ENCODE measurements at regions of chr9 and their contacts with region 1.

Region 1: DNA sequence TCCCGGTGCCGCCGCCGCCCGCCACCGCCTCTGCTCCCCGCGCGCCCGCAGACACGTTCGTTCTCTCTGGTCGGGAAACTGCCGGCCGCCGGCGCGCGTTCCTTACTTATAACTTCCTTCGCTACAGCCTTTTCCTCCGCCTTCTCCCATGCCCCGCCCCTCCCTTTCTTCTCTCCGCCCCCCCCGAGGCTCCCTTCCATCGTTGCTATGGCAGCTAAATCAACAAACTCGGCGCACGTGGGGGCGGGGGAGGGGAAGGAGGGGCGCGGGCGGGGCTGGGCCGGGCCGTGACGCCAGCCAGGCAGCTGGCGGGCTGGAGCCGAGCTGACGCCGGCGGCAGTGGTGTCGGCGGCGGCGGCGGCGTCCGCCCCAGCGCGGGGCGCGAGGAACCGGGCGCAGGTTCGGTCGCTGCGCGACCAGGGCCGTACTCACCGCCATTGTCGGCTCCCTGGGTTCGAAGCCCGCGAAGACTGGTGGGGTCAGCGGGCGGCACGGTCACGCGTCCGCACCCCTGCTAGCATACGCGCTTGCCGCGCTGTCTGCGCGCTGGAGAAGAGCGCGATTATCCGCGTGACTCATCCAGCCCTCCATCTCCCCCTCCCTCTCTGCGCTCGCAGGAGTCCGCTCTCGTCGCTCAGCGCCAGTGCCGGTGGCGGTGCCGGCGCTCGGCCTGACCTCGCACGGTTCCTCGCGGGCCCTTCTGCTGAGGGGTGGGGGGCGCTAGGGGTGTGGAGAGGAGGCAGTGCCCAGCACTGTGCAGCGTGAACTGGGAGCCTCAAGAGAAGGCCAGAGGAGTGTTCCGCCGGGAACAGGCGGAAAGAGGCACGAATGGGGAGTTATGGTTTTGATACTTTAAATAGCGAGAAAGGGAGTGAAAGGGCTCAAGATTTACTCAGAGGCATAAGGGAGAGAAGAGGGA is at the start of gene KLF4:
- DNase-seq: peak; percentile 96
- H3K4me3 ChIP-seq: peak within 1 kb of the TSS; percentile 66 to 95
- H3K27ac ChIP-seq: peak within 1 kb of the TSS; percentile 93 to 95
- H3K4me1 ChIP-seq: peaks cover 4% of the 10 kb centered on the region
- H3K27me3 ChIP-seq: no peaks in the 10 kb centered on the region
- CTCF ChIP-seq: peak in 1 of 4 experiments; percentile 22
- POLR2A ChIP-seq: peak; percentile 61
- total RNA-seq, gene KLF4: 41.4 to 50.0 TPM

Region 2: GRCh38 chr9:107351382-107352045 is 138.4 kb before region 1 on chr9:
- intact Hi-C with region 1: no loop called
- DNase-seq: peak; percentile 36
- H3K4me3 ChIP-seq: no peak overlapping the region
- H3K27ac ChIP-seq: no peak overlapping the region
- H3K4me1 ChIP-seq: no peaks in the 10 kb centered on the region
- H3K27me3 ChIP-seq: no peaks in the 10 kb centered on the region
- CTCF ChIP-seq: no peak
- POLR2A ChIP-seq: no peak

Region 3: GRCh38 chr9:107637421-107638420 is 147.8 kb after region 1 on chr9:
- intact Hi-C with region 1: loop called (anchors 2 kb)
- DNase-seq: peak; percentile 61
- H3K4me3 ChIP-seq: peak overlapping the region; percentile 36 to 38
- H3K27ac ChIP-seq: peak overlapping the region; percentile 66 to 90
- H3K4me1 ChIP-seq: no peaks in the 10 kb centered on the region
- H3K27me3 ChIP-seq: no peaks in the 10 kb centered on the region
- CTCF ChIP-seq: peak in 2 of 4 experiments; percentile 12 to 22
- POLR2A ChIP-seq: peak; percentile 55

Region 4: GRCh38 chr9:107749787-107750444 is 260.0 kb after region 1 on chr9:
- intact Hi-C with region 1: loop called (anchors 5 kb)
- DNase-seq: peak; percentile 85
- H3K4me3 ChIP-seq: no peak overlapping the region
- H3K27ac ChIP-seq: peak overlapping the region; percentile 43 to 68
- H3K4me1 ChIP-seq: no peaks in the 10 kb centered on the region
- H3K27me3 ChIP-seq: no peaks in the 10 kb centered on the region
- CTCF ChIP-seq: no peak
- POLR2A ChIP-seq: no peak

Region 5: GRCh38 chr9:108142504-108143201 is 652.7 kb after region 1 on chr9:
- intact Hi-C with region 1: loop called (anchors 5 kb)
- DNase-seq: peak; percentile 95
- H3K4me3 ChIP-seq: no peak overlapping the region
- H3K27ac ChIP-seq: peak overlapping the region; percentile 54 to 63
- H3K4me1 ChIP-seq: peaks cover 10% of the 10 kb centered on the region
- H3K27me3 ChIP-seq: no peaks in the 10 kb centered on the region
- CTCF ChIP-seq: peak in 2 of 4 experiments; percentile 15 to 28
- POLR2A ChIP-seq: no peak

Region 6: DNA sequence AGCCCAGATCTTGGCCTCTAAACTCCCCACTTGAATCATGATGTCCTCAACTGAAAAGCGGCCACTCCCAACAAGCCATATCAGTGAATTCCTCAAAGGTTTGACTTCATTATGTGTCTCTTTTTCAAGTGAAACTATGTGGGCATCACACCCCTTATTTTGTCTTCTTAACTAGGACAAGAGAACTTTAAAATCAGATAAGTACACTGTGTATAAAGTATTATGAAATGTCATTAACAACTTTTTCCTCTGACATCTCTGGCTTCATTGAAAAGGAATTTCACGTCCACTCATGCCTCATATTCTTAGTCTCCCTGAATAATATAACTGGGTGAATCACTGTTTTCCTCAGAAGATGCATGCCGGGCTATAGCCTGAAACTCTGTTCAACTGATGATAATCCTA is 950.0 kb after region 1 on chr9:
- intact Hi-C with region 1: loop called (anchors 10 kb)
- DNase-seq: no peak
- H3K4me3 ChIP-seq: no peak overlapping the region
- H3K27ac ChIP-seq: no peak overlapping the region
- H3K4me1 ChIP-seq: no peaks in the 10 kb centered on the region
- H3K27me3 ChIP-seq: no peaks in the 10 kb centered on the region
- CTCF ChIP-seq: no peak
- POLR2A ChIP-seq: no peak